ENCODE measurements at regions of chr2 and their contacts with region 1.

Region 1: DNA sequence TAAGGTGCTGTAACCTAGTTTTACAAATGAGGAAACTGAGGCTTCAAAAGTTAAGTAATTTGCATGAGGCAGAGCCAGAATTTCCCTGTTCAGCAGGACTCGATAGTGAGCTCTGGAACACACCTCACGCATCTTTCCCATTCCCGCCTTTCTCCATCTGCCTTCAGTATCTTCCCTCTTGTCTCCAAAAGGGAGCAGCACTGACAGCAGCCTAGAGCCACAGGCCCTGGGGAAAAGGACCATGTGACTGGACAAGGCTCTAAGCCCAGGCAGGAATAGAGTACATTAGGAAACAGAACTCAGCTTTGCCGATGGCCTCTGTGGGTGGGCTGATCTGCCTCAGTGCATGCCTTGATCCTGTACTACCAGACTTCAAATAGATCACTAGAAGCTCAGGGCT is 21.5 kb downstream of the GPR155 start:
- DNase-seq: no peak
- H3K4me3 ChIP-seq: no peak overlapping the region
- H3K27ac ChIP-seq: no peak overlapping the region
- H3K4me1 ChIP-seq: no peaks in the 10 kb centered on the region
- H3K27me3 ChIP-seq: 0 out of 7 replicates have a peak, but pooled peaks cover 0 to 2% (median 0%) of the 10 kb centered on the region in 4 experiments
- CTCF ChIP-seq: peak; percentile 17 to 38 (median 28); a peak in 3 of 4 replicates
- EP300 ChIP-seq: no peak
- POLR2A ChIP-seq: no peak
- RAD21 ChIP-seq: peak; percentile 22 to 48; a peak in 2 of 4 replicates

Region 2: GRCh38 chr2:174210862-174211261 is 254.5 kb before region 1 on chr2:
- CTCF ChIA-PET with region 1: no interaction called
- POLR2A ChIA-PET with region 1: no interaction called
- DNase-seq: no peak
- H3K4me3 ChIP-seq: no peak overlapping the region
- H3K27ac ChIP-seq: no peak overlapping the region
- H3K4me1 ChIP-seq: no peaks in the 10 kb centered on the region
- H3K27me3 ChIP-seq: no peaks in the 10 kb centered on the region
- CTCF ChIP-seq: no peak
- EP300 ChIP-seq: no peak
- POLR2A ChIP-seq: no peak
- RAD21 ChIP-seq: no peak

Region 3: DNA sequence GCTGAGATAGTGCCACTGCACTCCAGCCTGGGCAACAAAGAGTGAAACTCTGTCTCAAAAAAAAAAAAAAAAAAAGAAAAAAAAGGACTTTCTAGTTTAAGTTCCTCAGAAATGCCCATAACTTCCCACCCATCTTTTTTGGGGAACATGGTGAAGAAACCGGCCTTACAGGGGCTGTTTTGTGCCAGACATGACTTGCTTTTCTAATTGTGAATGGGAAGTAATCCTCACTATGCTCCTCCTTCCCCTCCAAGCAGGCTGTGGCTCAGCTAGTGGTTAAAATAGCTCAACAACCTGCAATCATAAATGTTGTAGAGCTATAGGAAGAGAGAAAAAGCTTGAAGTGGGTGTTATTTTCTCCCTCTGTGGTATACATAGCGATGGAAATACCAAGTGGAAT is 182.9 kb before region 1 on chr2:
- CTCF ChIA-PET with region 1: no interaction called
- POLR2A ChIA-PET with region 1: no interaction called
- DNase-seq: no peak
- H3K4me3 ChIP-seq: no peak overlapping the region
- H3K27ac ChIP-seq: no peak overlapping the region
- H3K4me1 ChIP-seq: peaks cover 0 to 3% (median 0%) of the 10 kb centered on the region in 4 experiments; a peak in 1 of 7 replicates
- H3K27me3 ChIP-seq: no peaks in the 10 kb centered on the region
- CTCF ChIP-seq: no peak
- EP300 ChIP-seq: no peak
- POLR2A ChIP-seq: no peak
- RAD21 ChIP-seq: no peak

Region 4: DNA sequence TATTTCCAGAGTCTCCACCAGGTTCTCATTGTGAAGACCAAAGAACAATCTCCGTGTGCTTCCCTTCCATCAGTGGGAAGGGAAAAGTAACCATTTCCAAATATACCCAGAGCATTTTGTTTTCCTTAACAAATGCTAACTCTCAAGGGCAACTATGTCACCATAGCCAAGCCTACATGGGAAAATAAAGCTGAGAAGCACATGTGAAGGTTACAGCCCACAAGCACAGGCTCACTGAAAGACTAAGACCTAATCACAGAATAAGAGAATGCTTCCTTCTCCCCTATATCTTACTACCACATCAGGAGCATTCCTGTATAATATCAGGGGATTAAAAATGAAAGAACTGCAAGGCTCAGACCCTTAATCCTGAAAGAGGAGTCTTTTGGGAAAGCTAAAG is 102.4 kb before region 1 on chr2:
- CTCF ChIA-PET with region 1: no interaction called
- POLR2A ChIA-PET with region 1: no interaction called
- DNase-seq: no peak
- H3K4me3 ChIP-seq: no peak overlapping the region
- H3K27ac ChIP-seq: no peak overlapping the region
- H3K4me1 ChIP-seq: no peaks in the 10 kb centered on the region
- H3K27me3 ChIP-seq: no peaks in the 10 kb centered on the region
- CTCF ChIP-seq: no peak
- EP300 ChIP-seq: no peak
- POLR2A ChIP-seq: no peak
- RAD21 ChIP-seq: no peak

Region 5: DNA sequence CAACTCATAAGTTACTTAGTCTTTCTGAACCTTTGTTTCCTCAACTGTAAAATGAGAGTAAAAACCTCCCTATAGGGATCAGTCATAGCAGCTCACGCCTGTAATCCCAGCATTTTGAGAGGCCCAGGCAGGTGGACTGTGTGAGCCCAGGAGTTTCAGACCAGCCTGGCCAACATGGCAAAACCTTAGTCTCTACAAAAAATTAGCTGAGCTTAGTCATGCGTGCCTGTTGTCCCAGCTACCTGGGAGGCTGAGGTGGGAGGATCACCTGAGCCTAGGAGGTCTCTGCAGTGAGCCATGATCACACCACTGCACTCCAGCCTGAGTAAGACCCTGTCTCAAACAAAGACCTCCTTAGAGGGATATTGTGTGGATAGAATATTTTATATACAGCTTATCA is 19.2 kb after region 1 on chr2:
- CTCF ChIA-PET with region 1: interaction called, 13 read pairs
- POLR2A ChIA-PET with region 1: no interaction called
- DNase-seq: no peak
- H3K4me3 ChIP-seq: no peak overlapping the region
- H3K27ac ChIP-seq: no peak overlapping the region
- H3K4me1 ChIP-seq: no peaks in the 10 kb centered on the region; a peak in 5 of 7 replicates
- H3K27me3 ChIP-seq: peaks cover 0 to 15% (median 9%) of the 10 kb centered on the region in 4 experiments; a peak in 6 of 7 replicates
- CTCF ChIP-seq: no peak
- EP300 ChIP-seq: no peak
- POLR2A ChIP-seq: no peak
- RAD21 ChIP-seq: no peak

Region 6: GRCh38 chr2:174546581-174547506 is 81.5 kb after region 1 on chr2:
- CTCF ChIA-PET with region 1: interaction called, 77 read pairs
- POLR2A ChIA-PET with region 1: interaction called, 3 read pairs
- DNase-seq: peak; percentile 38 to 65
- H3K4me3 ChIP-seq: no peak overlapping the region
- H3K27ac ChIP-seq: no peak overlapping the region
- H3K4me1 ChIP-seq: peaks cover 0 to 2% (median 0%) of the 10 kb centered on the region in 4 experiments; a peak in 1 of 7 replicates
- H3K27me3 ChIP-seq: no peaks in the 10 kb centered on the region
- CTCF ChIP-seq: peak; percentile 31 to 74 (median 74)
- EP300 ChIP-seq: no peak; a peak in 1 of 3 replicates
- POLR2A ChIP-seq: no peak
- RAD21 ChIP-seq: peak; percentile 78 to 88

Region 7: DNA sequence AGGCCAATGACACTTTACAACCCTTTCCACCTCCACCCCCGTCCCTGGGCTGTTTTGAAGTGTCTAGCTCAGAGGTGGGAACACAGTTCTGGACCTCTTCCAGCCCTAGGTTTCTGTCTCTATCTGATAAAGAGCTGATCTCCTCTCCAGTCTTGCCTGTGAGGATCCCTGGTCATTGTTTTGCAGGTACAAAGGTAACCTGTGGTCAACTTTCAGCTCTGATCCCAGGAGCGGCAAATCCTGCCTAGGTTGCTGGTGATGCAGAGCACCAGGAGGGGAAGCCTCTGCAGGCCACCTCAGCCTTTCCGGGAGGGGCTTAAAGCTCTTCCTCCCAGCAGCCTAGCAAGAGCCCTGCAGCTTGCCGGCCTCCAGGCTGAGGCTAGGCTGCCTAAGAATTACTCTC is 202.1 kb after region 1 on chr2:
- CTCF ChIA-PET with region 1: interaction called, 12 read pairs
- POLR2A ChIA-PET with region 1: no interaction called
- DNase-seq: no peak
- H3K4me3 ChIP-seq: no peak overlapping the region
- H3K27ac ChIP-seq: no peak overlapping the region
- H3K4me1 ChIP-seq: peaks cover 0 to 6% (median 1%) of the 10 kb centered on the region in 4 experiments; a peak in 3 of 7 replicates
- H3K27me3 ChIP-seq: no peaks in the 10 kb centered on the region
- CTCF ChIP-seq: no peak
- EP300 ChIP-seq: no peak
- POLR2A ChIP-seq: no peak
- RAD21 ChIP-seq: no peak